Ascending aorta (tissue), 2 donors: ENCODE measurements at regions of chr11 and their contacts with region 1.

Region 1: GRCh38 chr11:75582895-75583717 is 21.1 kb downstream of the SERPINH1 start:
- DNase-seq: peak in 1 of 2 donors; percentile 78
- H3K4me3 ChIP-seq: peak overlapping the region; percentile 82 to 83
- H3K27ac ChIP-seq: peak overlapping the region; percentile 97 to 99
- H3K4me1 ChIP-seq: peaks cover 0 to 15% of the 10 kb centered on the region in 2 donors
- H3K27me3 ChIP-seq: no peaks in the 10 kb centered on the region
- CTCF ChIP-seq: peak; percentile 33 to 43 (median 39)

Region 2: DNA sequence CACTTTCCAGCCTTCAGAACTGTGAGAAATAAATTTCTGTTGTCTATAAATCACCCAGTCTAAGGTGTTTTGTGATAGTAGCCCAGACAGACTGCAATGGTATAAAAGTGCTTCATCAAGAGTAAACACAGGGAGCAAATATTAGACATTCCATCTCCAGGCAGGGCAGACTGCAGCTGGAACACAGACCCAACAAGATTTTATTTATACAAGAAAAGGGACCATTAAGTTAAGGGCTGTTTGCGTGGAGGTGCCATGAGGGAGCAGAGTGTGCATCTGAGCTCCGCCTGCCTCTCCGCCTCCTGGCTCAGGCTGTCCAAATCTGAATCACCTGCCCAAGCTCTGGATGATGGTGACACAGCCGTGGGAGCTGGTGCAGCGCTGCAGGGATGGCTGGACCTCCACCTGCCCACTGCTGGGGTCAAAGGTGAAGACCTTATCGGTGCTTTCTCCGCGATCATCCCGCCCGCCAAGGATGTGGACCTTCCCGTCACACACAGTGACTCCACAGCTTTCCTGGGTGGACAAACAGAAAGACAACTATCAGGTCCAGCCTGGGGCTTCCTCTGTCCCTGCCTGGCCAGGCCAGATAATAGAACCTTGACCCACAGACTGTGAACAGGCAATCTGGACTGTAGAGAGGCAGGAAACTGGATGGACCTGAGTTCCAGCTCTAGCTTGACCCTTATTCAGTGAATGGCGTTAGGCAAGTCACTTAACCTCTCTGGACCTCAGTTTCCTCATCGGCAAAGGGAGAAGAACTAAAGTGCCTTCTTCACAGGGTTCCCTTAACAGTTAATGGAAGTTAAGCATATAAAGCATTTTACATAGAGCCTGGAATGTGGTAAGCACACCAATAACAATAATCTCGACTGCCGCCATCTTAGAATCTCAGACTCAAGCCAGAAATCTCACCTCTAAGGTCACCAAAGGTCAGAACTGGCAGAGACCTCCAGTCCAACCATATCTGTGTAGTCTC is 160.6 kb before region 1 on chr11:
- intact Hi-C with region 1: loop called (anchors 5 kb)
- DNase-seq: no peak
- H3K4me3 ChIP-seq: no peak overlapping the region
- H3K27ac ChIP-seq: peak overlapping the region; percentile 61 to 91
- H3K4me1 ChIP-seq: peaks cover 10 to 21% of the 10 kb centered on the region in 2 donors
- H3K27me3 ChIP-seq: no peaks in the 10 kb centered on the region
- CTCF ChIP-seq: no peak

Region 3: GRCh38 chr11:75603791-75604736 is 21.0 kb after region 1 on chr11:
- intact Hi-C with region 1: loop called (anchors 1 kb)
- DNase-seq: no peak
- H3K4me3 ChIP-seq: peak overlapping the region in 1 of 2 donors; percentile 43
- H3K27ac ChIP-seq: peak overlapping the region; percentile 83 to 86
- H3K4me1 ChIP-seq: peaks cover 3 to 10% of the 10 kb centered on the region in 2 donors
- H3K27me3 ChIP-seq: no peaks in the 10 kb centered on the region
- CTCF ChIP-seq: no peak

Region 4: GRCh38 chr11:75667831-75668450 is 84.8 kb after region 1 on chr11:
- intact Hi-C with region 1: loop called (anchors 5 kb)
- DNase-seq: peak in 1 of 2 donors; percentile 68
- H3K4me3 ChIP-seq: peak overlapping the region; percentile 66 to 74
- H3K27ac ChIP-seq: peak overlapping the region; percentile 48 to 54
- H3K4me1 ChIP-seq: peaks cover 0 to 14% of the 10 kb centered on the region in 2 donors
- H3K27me3 ChIP-seq: no peaks in the 10 kb centered on the region
- CTCF ChIP-seq: no peak